PC-9 (cell line): ENCODE measurements at regions of chr21 and their contacts with region 1.

Region 1: DNA sequence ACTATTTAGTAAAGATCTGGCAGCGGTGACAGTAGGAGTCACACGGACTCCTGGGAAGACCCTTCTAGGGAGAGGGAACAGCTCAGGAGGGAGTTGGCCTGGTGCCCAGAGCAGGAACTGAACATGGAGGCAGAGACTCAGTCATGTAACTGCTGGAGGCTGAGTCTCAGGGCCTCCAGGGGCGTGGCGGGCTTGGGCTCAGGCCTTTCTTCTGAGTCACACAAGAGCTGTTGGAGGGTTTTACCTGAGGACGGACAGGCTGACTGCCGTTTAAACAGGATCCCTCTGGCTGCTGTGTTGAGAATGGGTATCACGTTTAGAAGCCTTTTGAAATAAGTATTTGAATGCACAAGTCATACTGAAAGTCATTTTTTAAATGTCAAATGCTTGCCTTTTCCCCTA is 7.2 kb upstream of the ETS2 start:
- DNase-seq: peak; percentile 85 to 91
- H3K4me3 ChIP-seq: peak overlapping the region; percentile 26; the same call in 1 of the 2 replicates
- H3K27ac ChIP-seq: peak overlapping the region; percentile 98
- H3K4me1 ChIP-seq: peaks cover 56% of the 10 kb centered on the region
- H3K27me3 ChIP-seq: no peaks in the 10 kb centered on the region
- CTCF ChIP-seq: no peak

Region 2: GRCh38 chr21:38505654-38506515 is 292.6 kb before region 1 on chr21:
- CTCF ChIA-PET with region 1: no interaction called
- POLR2A ChIA-PET with region 1: no interaction called
- intact Hi-C with region 1: loop called (anchors 1 kb)
- DNase-seq: peak in 1 of 2 experiments; percentile 12
- H3K4me3 ChIP-seq: no peak overlapping the region
- H3K27ac ChIP-seq: no peak overlapping the region
- H3K4me1 ChIP-seq: no peaks in the 10 kb centered on the region
- H3K27me3 ChIP-seq: peaks cover 16% of the 10 kb centered on the region; the same call in 1 of the 2 replicates
- CTCF ChIP-seq: peak; percentile 63

Region 3: DNA sequence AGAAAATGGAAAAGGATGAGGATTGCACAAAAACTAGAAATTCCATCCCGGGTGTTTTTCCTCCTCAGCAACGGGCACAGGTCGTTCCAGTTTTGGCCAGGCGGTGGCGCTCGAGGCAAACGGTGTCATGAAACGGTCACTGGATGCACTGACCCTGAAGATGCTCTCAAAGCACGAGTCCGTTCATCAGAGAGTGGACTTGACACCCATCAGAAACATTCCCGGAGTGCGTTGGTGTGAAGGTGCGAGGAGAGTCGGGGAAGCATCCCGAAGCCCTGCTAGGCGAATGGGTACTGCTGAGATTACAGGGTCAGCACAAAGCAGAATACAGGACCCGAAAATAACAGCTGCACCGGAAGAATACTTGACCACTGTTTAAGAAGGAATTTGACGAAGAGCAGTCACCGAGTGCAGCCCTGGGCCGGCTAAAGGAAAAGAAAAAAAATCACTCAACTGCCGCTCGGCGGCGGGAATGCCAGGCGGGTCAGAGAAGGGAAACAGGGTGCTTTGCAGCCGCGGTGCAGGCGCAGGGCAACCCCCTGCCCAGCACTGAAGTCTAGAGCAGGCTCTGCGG is 64.4 kb before region 1 on chr21:
- CTCF ChIA-PET with region 1: no interaction called
- POLR2A ChIA-PET with region 1: no interaction called
- intact Hi-C with region 1: loop called (anchors 2 kb)
- DNase-seq: peak; percentile 44 to 81
- H3K4me3 ChIP-seq: no peak overlapping the region
- H3K27ac ChIP-seq: no peak overlapping the region
- H3K4me1 ChIP-seq: no peaks in the 10 kb centered on the region
- H3K27me3 ChIP-seq: no peaks in the 10 kb centered on the region
- CTCF ChIP-seq: peak; percentile 89

Region 4: DNA sequence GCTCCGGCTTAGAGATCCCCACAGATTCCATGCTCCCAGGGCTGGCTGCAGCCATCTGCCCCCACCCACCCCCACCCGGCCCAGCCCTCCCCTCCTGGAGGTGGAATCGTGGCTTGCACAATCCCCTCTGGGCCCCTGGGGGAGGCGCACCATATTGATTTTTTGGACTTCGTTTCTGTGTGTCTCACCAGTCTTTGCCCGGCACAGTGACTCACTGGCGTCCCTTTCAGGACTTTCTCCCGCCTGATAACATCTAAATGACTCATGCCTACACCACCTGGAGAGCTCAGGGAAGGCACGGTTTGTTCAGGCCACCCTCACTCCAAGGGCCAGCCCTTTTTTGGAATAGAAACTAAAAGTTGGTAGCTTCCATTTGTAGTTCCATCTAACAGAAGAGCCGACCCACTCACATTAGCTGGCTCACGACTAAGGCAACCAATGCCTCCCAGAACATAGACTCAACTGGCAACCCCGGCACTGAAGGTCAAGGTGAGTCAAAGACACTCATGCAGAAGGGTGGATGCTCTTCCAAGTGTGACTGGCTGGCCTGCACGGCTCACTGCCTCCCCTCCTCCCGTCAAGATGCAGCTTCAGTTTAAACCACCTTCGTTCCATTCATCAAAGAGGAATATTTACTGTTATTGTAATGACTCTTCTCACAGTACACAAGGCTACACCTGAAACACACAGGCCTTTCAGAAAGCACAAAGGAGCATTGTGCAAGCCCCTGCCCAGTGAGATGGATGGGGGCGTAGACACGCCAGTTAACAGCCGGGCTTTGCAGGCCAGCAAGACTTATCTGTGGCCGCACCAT is 10.8 kb before region 1 on chr21:
- CTCF ChIA-PET with region 1: interaction called, 4 read pairs
- POLR2A ChIA-PET with region 1: no interaction called
- intact Hi-C with region 1: loop called (anchors 1 kb)
- DNase-seq: peak; percentile 82 to 94
- H3K4me3 ChIP-seq: peak overlapping the region; percentile 50; the same call in 1 of the 2 replicates
- H3K27ac ChIP-seq: peak overlapping the region; percentile 92
- H3K4me1 ChIP-seq: peaks cover 30% of the 10 kb centered on the region
- H3K27me3 ChIP-seq: no peaks in the 10 kb centered on the region
- CTCF ChIP-seq: no peak

Region 5: GRCh38 chr21:39033878-39034602 is 235.6 kb after region 1 on chr21:
- CTCF ChIA-PET with region 1: no interaction called
- POLR2A ChIA-PET with region 1: interaction called, 22 read pairs
- intact Hi-C with region 1: no loop called
- DNase-seq: peak in 1 of 2 experiments; percentile 31
- H3K4me3 ChIP-seq: no peak overlapping the region
- H3K27ac ChIP-seq: no peak overlapping the region
- H3K4me1 ChIP-seq: peaks cover 13% of the 10 kb centered on the region
- H3K27me3 ChIP-seq: no peaks in the 10 kb centered on the region
- CTCF ChIP-seq: no peak

Region 6: DNA sequence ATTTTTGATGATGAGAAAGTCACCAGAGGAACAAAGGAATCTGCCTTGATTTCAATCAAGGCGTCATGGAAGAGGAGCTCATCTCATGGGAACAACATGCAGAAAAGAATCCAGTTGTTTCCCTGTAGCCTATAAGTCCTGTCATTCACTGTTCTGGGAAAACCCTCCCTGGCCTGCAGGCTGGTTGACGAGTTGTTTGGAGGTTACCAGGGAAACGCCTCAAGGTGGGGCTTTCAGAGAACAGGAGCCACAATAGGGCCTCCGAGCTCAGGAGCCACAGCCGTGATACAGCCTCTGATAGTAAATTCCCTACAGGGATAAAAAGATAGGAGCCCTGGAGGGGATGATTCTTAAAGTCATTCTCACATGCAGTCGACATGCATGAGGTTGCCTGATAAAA is 249.6 kb after region 1 on chr21:
- CTCF ChIA-PET with region 1: no interaction called
- POLR2A ChIA-PET with region 1: no interaction called
- intact Hi-C with region 1: loop called (anchors 1 kb)
- DNase-seq: peak; percentile 86 to 90
- H3K4me3 ChIP-seq: no peak overlapping the region
- H3K27ac ChIP-seq: peak overlapping the region; percentile 44; the same call in 1 of the 2 replicates
- H3K4me1 ChIP-seq: 0 out of 2 replicates have a peak, but pooled peaks cover 15% of the 10 kb centered on the region
- H3K27me3 ChIP-seq: no peaks in the 10 kb centered on the region
- CTCF ChIP-seq: no peak

Region 7: GRCh38 chr21:39137248-39138178 is 339.0 kb after region 1 on chr21:
- CTCF ChIA-PET with region 1: no interaction called
- POLR2A ChIA-PET with region 1: no interaction called
- intact Hi-C with region 1: loop called (anchors 5 kb)
- DNase-seq: no peak
- H3K4me3 ChIP-seq: no peak overlapping the region
- H3K27ac ChIP-seq: no peak overlapping the region
- H3K4me1 ChIP-seq: no peaks in the 10 kb centered on the region
- H3K27me3 ChIP-seq: no peaks in the 10 kb centered on the region
- CTCF ChIP-seq: no peak